ENCODE measurements at regions of chr1 and their contacts with region 1.

Region 1: DNA sequence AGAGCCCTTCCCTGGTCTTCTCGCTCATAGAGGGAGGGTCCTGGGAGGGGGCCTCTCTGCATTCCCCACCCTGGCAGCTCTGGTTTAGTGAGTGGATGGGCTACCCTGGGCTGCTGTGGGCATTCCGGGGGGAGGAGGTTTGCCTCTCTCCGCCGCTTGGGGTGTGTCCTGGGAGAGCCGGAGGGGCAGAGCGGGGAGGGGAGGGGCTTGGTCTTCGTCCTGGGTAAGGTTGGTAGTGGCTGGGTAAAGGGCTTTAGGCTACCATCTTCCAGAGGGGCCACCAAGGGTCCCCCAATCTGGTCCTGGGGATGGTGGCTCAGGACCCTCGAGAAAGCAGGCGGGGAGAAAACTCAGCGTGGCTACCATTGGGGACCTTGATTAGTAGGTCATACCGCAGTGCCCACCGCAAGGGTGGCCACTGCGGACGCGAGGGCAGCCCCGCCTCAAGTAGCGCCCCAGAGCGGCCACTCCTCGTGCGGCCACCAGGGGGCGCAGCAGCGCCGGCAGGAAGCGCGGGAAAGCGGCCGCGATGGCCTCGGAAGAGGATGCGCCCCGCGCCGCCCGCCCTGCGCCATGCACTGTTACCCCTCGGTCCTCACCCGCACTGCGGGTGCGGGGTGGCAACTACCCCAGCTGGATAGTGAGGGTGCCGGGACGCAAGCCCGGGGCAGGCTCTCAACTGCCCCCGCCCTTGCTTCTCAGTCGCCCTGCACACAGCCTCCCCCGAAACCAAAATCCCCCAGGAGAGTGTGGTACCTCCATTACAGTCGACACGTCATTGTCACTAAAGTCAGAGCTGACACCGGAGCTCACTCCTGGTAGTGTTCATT is 44.1 kb upstream of the SLC25A33 start:
- DNase-seq: peak; percentile 32 to 60
- ATAC-seq: peak; percentile 78 to 90
- H3K4me3 ChIP-seq: peak overlapping the region; percentile 34; the same call in 2 of the 3 replicates
- H3K27ac ChIP-seq: peak overlapping the region in 1 of 2 experiments; percentile 73; a peak in 3 of 6 replicates
- H3K4me1 ChIP-seq: 0 out of 3 replicates have a peak, but pooled peaks cover 3% of the 10 kb centered on the region
- CTCF ChIP-seq: peak; percentile 88
- EP300 ChIP-seq: no peak
- POLR2A ChIP-seq: no peak
- RAD21 ChIP-seq: peak; percentile 54 to 63

Region 2: DNA sequence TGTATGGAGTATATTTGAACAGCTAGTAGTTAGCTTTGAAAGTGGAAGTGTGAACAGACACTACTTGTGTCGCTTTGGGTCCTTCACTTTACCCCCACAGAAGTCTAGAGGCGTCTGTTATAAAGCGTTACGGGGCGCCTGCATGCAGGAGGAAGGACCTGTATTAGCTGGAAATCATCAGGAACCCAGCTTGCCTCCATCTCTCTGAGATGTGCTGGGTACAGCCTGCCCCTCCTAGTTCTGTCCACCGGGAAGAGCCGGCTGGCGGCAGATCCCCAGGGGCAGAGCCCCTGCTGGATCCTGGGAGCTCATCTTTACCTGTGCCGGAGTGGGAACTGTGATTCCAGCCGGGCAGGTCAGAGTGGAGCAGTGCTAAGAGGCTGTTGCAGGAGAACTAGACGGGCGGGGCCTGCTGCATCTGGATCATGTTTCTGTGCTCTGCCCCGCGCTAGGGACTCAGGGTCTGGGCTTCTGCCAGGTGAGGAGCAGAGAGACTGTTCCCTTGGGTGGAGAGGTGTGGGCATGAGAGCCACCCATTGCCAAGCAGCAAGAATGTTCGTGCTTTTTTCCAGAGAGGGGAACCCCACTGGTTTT is 224.8 kb before region 1 on chr1:
- CTCF ChIA-PET with region 1: interaction called, 127 read pairs
- POLR2A ChIA-PET with region 1: no interaction called
- DNase-seq: no peak
- ATAC-seq: no peak
- H3K4me3 ChIP-seq: no peak overlapping the region
- H3K27ac ChIP-seq: peak overlapping the region in 1 of 2 experiments; percentile 35; a peak in 1 of 6 replicates
- H3K4me1 ChIP-seq: peaks cover 6% of the 10 kb centered on the region; the same call in 2 of the 3 replicates
- CTCF ChIP-seq: no peak
- EP300 ChIP-seq: no peak
- POLR2A ChIP-seq: no peak
- RAD21 ChIP-seq: no peak

Region 3: DNA sequence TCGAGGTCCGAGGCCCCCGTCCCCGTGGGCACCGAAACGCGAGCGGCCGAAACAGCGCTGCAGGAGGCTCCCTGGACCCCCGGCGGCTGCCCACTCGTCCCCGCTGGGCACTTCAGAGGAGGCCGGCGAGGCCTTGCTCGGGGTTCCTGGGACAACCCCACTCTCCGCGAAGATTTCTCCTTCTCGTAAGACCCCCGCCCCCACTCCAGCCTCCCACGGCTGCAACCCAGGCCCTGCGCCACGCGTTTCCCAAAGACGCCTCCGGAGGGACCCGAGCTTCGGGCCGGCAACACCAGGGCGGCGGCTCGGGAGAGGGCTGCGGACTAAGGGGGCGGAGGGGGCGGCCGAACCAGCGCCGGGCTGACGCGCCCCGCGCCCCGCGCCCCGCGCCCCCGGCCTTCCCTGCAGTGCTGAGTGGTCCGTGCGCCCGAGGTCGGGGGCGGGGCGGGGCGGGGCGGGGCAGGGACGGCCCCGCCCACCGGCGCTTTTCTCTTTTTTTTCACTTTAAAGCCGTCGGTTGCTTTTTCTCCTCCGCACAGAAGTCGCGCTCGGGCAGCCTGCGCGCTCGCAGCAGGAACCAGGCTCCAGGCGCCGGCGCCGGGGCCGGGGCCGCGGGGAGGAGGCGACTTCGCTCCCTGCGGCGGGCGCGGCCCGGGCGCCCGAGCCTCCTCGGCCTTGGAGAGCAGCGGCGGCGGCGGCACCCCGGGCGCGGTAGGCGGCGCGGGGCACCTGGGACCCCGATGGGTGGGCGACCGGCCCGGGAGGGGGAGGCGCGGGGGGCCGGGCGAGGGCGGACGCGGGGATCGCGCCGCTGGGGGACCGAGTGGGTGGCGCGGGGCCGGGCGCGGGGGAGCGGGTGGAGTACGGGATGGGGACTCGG is 202.5 kb before region 1 on chr1 and contains the start of gene SPSB1:
- CTCF ChIA-PET with region 1: interaction called, 37 read pairs
- POLR2A ChIA-PET with region 1: no interaction called
- DNase-seq: peak in 1 of 2 experiments; percentile 64
- ATAC-seq: peak; percentile 47 to 54
- H3K4me3 ChIP-seq: peak within 1 kb of the TSS; percentile 96
- H3K27ac ChIP-seq: peak within 1 kb of the TSS; percentile 93 to 99
- H3K4me1 ChIP-seq: peaks cover 57% of the 10 kb centered on the region
- CTCF ChIP-seq: no peak
- EP300 ChIP-seq: no peak
- POLR2A ChIP-seq: peak; percentile 67
- RAD21 ChIP-seq: no peak; a peak in 1 of 5 replicates
- polyA plus RNA-seq, gene SPSB1: 19.4 and 23.7 TPM in 2 replicates

Region 4: GRCh38 chr1:9338397-9339246 is 156.5 kb before region 1 on chr1:
- CTCF ChIA-PET with region 1: no interaction called
- POLR2A ChIA-PET with region 1: no interaction called
- DNase-seq: no peak
- ATAC-seq: peak in 1 of 2 experiments; percentile 47; a peak in 3 of 6 replicates
- H3K4me3 ChIP-seq: no peak overlapping the region
- H3K27ac ChIP-seq: peak overlapping the region in 1 of 2 experiments; percentile 68; a peak in 2 of 6 replicates
- H3K4me1 ChIP-seq: peaks cover 20% of the 10 kb centered on the region
- CTCF ChIP-seq: no peak
- EP300 ChIP-seq: no peak
- POLR2A ChIP-seq: no peak
- RAD21 ChIP-seq: no peak

Region 5: DNA sequence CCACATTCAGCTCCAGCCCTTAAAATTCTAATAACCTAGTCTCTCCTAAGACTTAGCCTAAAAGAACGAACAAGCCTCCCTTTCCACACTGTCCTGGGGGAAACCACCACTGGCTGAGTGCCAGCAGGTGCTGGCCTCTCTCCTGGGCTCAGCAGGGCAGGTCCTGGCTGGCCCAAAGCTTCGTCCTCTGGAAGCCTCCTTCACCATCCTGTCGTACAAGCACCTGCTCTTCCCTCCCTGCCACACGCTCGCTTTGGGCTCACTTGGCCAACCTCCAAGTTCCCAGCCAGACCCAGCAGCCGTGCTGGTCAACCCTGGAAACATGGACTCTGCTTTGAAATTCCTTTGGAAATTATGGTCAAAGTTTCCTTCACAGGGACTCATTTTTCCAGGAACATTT is 14.1 kb before region 1 on chr1:
- CTCF ChIA-PET with region 1: interaction called, 16 read pairs
- POLR2A ChIA-PET with region 1: no interaction called
- DNase-seq: no peak
- ATAC-seq: no peak
- H3K4me3 ChIP-seq: no peak overlapping the region
- H3K27ac ChIP-seq: no peak overlapping the region
- H3K4me1 ChIP-seq: peaks cover 10% of the 10 kb centered on the region; the same call in 1 of the 3 replicates
- CTCF ChIP-seq: no peak
- EP300 ChIP-seq: no peak
- POLR2A ChIP-seq: no peak
- RAD21 ChIP-seq: no peak

Region 6: GRCh38 chr1:9573723-9574122 is 78.6 kb after region 1 on chr1:
- CTCF ChIA-PET with region 1: interaction called, 20 read pairs
- POLR2A ChIA-PET with region 1: no interaction called
- DNase-seq: peak in 1 of 2 experiments; percentile 17
- ATAC-seq: 0 out of 6 replicates have a peak, but pooled peaks of 1 of the 2 experiments have one; percentile 44
- H3K4me3 ChIP-seq: no peak overlapping the region
- H3K27ac ChIP-seq: no peak overlapping the region
- H3K4me1 ChIP-seq: no peaks in the 10 kb centered on the region
- CTCF ChIP-seq: peak; percentile 54
- EP300 ChIP-seq: no peak
- POLR2A ChIP-seq: no peak
- RAD21 ChIP-seq: peak; percentile 50 to 52; a peak in 4 of 5 replicates

Region 7: DNA sequence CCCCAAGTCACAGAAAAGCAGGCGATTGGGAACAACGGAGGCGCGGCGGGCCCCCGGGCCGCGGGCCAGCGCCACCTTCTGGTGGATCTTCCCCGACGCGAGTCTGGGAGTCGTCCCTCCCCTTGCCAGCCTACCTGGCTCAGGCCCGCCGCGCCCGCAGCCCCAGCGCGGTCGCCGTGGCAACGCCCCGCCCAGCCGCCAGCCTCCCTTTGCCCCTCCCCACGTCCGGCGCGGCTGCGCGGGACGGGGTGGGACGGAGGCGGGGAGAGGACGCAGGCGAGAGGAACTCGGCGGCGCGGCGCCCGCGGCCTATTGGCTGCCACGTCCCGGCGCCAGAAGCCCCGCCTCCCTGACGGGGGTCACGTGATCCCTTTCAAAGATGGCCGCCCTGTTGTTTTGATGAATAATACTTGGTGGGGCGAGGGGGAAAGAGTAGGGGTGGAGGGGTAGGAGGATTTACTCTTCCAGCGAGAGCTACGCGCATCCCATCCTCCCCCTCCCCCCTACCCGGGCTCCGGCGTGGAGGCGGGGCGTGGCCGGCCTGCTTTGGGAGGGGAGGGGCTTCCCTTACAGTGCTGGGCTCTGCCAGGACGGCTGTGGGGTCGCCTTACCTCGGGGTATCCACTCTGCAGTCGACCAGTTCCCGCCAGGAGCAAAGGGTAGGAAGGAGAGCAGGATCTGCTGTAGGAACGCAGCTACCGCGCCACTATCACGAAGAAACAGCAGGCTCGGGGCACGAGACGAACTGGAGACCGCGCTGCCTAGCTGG is 537.6 kb after region 1 on chr1 and contains the start of gene UBE4B:
- CTCF ChIA-PET with region 1: no interaction called
- POLR2A ChIA-PET with region 1: no interaction called
- DNase-seq: peak; percentile 76 to 96
- ATAC-seq: peak; percentile 89 to 94
- H3K4me3 ChIP-seq: peak within 1 kb of the TSS; percentile 77
- H3K27ac ChIP-seq: peak within 1 kb of the TSS; percentile 88 to 95
- H3K4me1 ChIP-seq: peaks cover 10% of the 10 kb centered on the region; the same call in 2 of the 3 replicates
- CTCF ChIP-seq: peak; percentile 84
- EP300 ChIP-seq: no peak
- POLR2A ChIP-seq: peak; percentile 57
- RAD21 ChIP-seq: peak; percentile 47 to 70; a peak in 4 of 5 replicates
- polyA plus RNA-seq, gene UBE4B: 13.5 and 19.5 TPM in 2 replicates

Measured in A549 (cell line).